Ovary (tissue), 10 donors: ENCODE measurements at regions of chr5 and their contacts with region 1.

Region 1: GRCh38 chr5:39539096-39539869 is 114.5 kb upstream of the DAB2 start:
- DNase-seq: peak; percentile 51 to 71 (median 55)
- H3K4me3 ChIP-seq: no peak overlapping the region
- H3K27ac ChIP-seq: peak overlapping the region in 1 of 2 donors; percentile 10
- H3K4me1 ChIP-seq: peaks cover 6% of the 10 kb centered on the region
- H3K27me3 ChIP-seq: no peaks in the 10 kb centered on the region
- CTCF ChIP-seq: no peak
- EP300 ChIP-seq: no peak
- POLR2A ChIP-seq: no peak

Region 2: DNA sequence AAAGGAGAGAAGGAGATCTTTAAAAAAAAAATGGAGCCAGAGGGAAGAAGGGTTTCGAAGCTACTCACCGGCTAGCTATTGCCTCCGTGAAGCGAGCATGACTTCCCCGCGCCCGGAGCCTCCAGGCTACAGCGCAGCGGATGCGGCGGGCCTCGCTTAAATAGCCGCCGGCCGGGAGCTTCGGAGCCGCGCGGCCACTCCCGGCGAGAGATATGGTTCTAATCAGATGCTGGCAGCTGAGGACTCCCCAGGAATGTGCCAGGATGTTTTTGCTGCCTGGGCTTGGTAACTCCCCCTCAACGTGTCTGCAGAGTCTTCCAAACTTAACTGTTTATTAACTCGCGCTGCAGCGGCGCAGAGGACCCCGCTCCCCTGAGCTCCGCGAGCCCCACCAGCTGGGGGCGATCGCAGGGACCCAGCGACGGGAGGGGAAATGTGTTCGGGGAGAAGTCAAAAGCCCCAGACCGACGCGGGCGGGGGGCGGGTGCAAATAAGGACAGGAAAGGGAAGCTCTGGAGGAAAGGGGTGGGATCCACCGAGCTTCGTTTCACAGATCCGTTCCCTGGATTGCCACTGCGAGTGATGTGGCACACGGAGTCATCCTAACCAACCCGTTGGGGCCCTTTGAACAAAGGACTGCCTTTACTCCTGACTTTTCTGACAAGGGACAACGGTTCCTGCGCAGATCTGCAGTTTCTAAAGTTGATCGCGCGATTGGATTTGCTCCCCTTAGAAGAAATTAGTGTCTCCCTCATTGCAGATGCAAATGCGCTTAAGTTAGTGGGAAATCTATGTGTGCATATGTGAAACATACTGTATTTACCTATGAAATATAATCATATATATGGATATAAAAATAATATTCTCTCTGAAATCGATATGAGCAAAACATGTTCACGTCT is 114.3 kb before region 1 on chr5 and contains the start of gene DAB2:
- intact Hi-C with region 1: loop called in 1 of 4 experiments (anchors 5 kb)
- DNase-seq: peak; percentile 78 to 86 (median 80)
- H3K4me3 ChIP-seq: peak within 1 kb of the TSS; percentile 68
- H3K27ac ChIP-seq: peak within 1 kb of the TSS; percentile 37 to 74
- H3K4me1 ChIP-seq: peaks cover 22% of the 10 kb centered on the region
- H3K27me3 ChIP-seq: no peaks in the 10 kb centered on the region
- CTCF ChIP-seq: peak in 2 of 3 donors; percentile 30 to 57
- EP300 ChIP-seq: no peak
- POLR2A ChIP-seq: peak; percentile 25
- total RNA-seq, gene DAB2: 25.0 to 79.0 (median 38.7) TPM